Activated naive CD4-positive, alpha-beta T cell treated with anti-CD3 and anti-CD28 coated beads for 36 hours (primary cell): ENCODE measurements at regions of chrX and their contacts with region 1.

Region 1: GRCh38 chrX:13669246-13669737 is 16.4 kb downstream of the TCEANC start:
- DNase-seq: peak; percentile 82
- H3K4me3 Mint-ChIP-seq: peak overlapping the region; percentile 69
- H3K27ac Mint-ChIP-seq: peak overlapping the region; percentile 92
- H3K4me1 Mint-ChIP-seq: peaks cover 14% of the 10 kb centered on the region
- H3K27me3 Mint-ChIP-seq: no peaks in the 10 kb centered on the region

Region 2: GRCh38 chrX:13653022-13653693 is 16.1 kb before region 1 on chrX and contains the start of gene TCEANC:
- CTCF ChIA-PET with region 1: no interaction called
- intact Hi-C with region 1: loop called (anchors 1 kb)
- DNase-seq: peak; percentile 95
- H3K4me3 Mint-ChIP-seq: peak within 1 kb of the TSS; percentile 88
- H3K27ac Mint-ChIP-seq: peak within 1 kb of the TSS; percentile 93
- H3K4me1 Mint-ChIP-seq: peaks cover 24% of the 10 kb centered on the region
- H3K27me3 Mint-ChIP-seq: no peaks in the 10 kb centered on the region
- total RNA-seq, gene TCEANC: 2.5 to 2.7 TPM

Region 3: GRCh38 chrX:13688958-13689740 is 19.9 kb after region 1 on chrX and contains the start of gene RAB9A:
- CTCF ChIA-PET with region 1: interaction called, 5 read pairs
- intact Hi-C with region 1: loop called (anchors 1 kb)
- DNase-seq: peak; percentile 83
- H3K4me3 Mint-ChIP-seq: peak within 1 kb of the TSS; percentile 82
- H3K27ac Mint-ChIP-seq: peak within 1 kb of the TSS; percentile 96
- H3K4me1 Mint-ChIP-seq: peaks cover 65% of the 10 kb centered on the region
- H3K27me3 Mint-ChIP-seq: no peaks in the 10 kb centered on the region
- total RNA-seq, gene RAB9A: 22.8 to 23.3 TPM

Region 4: GRCh38 chrX:13700380-13700779 is 31.1 kb after region 1 on chrX:
- CTCF ChIA-PET with region 1: no interaction called
- intact Hi-C with region 1: loop called (anchors 5 kb)
- DNase-seq: no peak
- H3K4me3 Mint-ChIP-seq: no peak overlapping the region
- H3K27ac Mint-ChIP-seq: no peak overlapping the region
- H3K4me1 Mint-ChIP-seq: peaks cover 68% of the 10 kb centered on the region
- H3K27me3 Mint-ChIP-seq: no peaks in the 10 kb centered on the region

Region 5: DNA sequence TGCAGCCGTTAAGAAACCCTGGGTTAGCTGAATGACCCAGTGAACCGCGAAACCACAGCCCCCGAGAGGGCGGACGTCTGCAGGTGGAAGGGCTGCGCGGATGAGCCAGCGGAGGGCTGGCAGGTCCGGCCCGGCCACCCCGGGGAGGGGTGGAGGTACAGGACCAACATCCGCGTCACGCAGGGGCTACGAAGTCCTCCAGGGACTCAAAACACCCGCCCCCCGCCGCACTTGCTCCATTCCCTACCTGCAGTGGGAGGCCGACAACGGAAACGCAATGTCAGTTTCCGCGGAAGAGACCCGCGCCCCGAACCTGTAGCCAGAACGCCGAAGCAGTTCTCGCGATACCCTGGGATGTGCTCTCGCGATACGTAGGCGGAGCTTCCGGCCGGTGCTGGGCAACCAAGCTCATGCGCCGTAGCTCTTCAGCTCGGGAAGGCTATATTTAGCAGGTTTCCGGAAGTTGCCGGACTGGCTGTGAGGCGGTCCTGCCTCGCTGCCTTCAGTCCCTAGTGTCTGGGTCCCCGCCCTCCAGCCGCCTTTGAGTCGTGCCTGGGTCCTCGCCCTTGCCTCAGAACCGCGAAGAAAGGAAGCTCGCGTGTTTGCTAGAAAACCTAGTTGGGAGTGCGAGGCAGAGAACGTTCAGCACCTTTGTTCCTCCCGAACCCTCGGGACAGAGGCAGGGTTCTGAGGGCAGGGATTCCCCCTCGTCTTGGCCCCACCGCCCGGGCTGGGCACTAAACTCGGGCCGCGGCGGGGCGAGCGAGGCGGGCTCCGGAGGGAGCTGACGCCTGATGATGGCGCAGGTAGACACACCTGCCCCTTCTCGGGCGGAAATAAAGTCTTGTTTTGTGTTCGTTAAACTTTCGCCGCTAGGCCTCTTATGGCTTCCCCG is 65.2 kb after region 1 on chrX and contains the starts of genes OFD1 and TRAPPC2:
- CTCF ChIA-PET with region 1: no interaction called
- intact Hi-C with region 1: loop called (anchors 1 kb)
- DNase-seq: peak; percentile 92
- H3K4me3 Mint-ChIP-seq: peak within 1 kb of the TSS; percentile 95
- H3K27ac Mint-ChIP-seq: peak within 1 kb of the TSS; percentile 92
- H3K4me1 Mint-ChIP-seq: peaks cover 43% of the 10 kb centered on the region
- H3K27me3 Mint-ChIP-seq: no peaks in the 10 kb centered on the region
- total RNA-seq, gene OFD1: 25.3 to 26.2 TPM
- total RNA-seq, gene TRAPPC2: 9.6 to 10.7 TPM

Region 6: GRCh38 chrX:15151267-15152186 is 1482.2 kb after region 1 on chrX:
- CTCF ChIA-PET with region 1: no interaction called
- intact Hi-C with region 1: loop called (anchors 10 kb)
- DNase-seq: peak; percentile 53
- H3K4me3 Mint-ChIP-seq: peak overlapping the region; percentile 32
- H3K27ac Mint-ChIP-seq: peak overlapping the region; percentile 69
- H3K4me1 Mint-ChIP-seq: peaks cover 28% of the 10 kb centered on the region
- H3K27me3 Mint-ChIP-seq: no peaks in the 10 kb centered on the region